Activated B cell treated with CpG ODN at 0.5 μM for 24 hours (primary cell): ENCODE measurements at regions of chr7 and their contacts with region 1.

Region 1: GRCh38 chr7:69739931-69740431 is 141.7 kb downstream of the AUTS2 start:
- DNase-seq: peak; percentile 18
- ATAC-seq: peak; percentile 56
- H3K4me3 Mint-ChIP-seq: peak overlapping the region; percentile 33
- H3K27ac Mint-ChIP-seq: peak overlapping the region; percentile 82
- H3K4me1 Mint-ChIP-seq: peaks cover 27% of the 10 kb centered on the region
- H3K27me3 Mint-ChIP-seq: no peaks in the 10 kb centered on the region
- CTCF ChIP-seq: no peak

Region 2: GRCh38 chr7:69564454-69565417 is 175.2 kb before region 1 on chr7:
- CTCF ChIA-PET with region 1: no interaction called
- POLR2A ChIA-PET with region 1: interaction called, 10 read pairs
- intact Hi-C with region 1: no loop called
- DNase-seq: no peak
- ATAC-seq: no peak
- H3K4me3 Mint-ChIP-seq: no peak overlapping the region
- H3K27ac Mint-ChIP-seq: no peak overlapping the region
- H3K4me1 Mint-ChIP-seq: no peaks in the 10 kb centered on the region
- H3K27me3 Mint-ChIP-seq: peaks cover 4% of the 10 kb centered on the region
- CTCF ChIP-seq: no peak

Region 3: GRCh38 chr7:69651101-69651590 is 88.8 kb before region 1 on chr7:
- CTCF ChIA-PET with region 1: no interaction called
- POLR2A ChIA-PET with region 1: interaction called, 4 read pairs
- intact Hi-C with region 1: loop called (anchors 5 kb)
- DNase-seq: no peak
- ATAC-seq: peak; percentile 85
- H3K4me3 Mint-ChIP-seq: peak overlapping the region; percentile 38
- H3K27ac Mint-ChIP-seq: peak overlapping the region; percentile 32
- H3K4me1 Mint-ChIP-seq: peaks cover 42% of the 10 kb centered on the region
- H3K27me3 Mint-ChIP-seq: no peaks in the 10 kb centered on the region
- CTCF ChIP-seq: no peak

Region 4: GRCh38 chr7:69696054-69696591 is 43.9 kb before region 1 on chr7:
- CTCF ChIA-PET with region 1: no interaction called
- POLR2A ChIA-PET with region 1: interaction called, 5 read pairs
- intact Hi-C with region 1: loop called (anchors 2 kb)
- DNase-seq: no peak
- ATAC-seq: peak; percentile 87
- H3K4me3 Mint-ChIP-seq: peak overlapping the region; percentile 13
- H3K27ac Mint-ChIP-seq: peak overlapping the region; percentile 56
- H3K4me1 Mint-ChIP-seq: peaks cover 43% of the 10 kb centered on the region
- H3K27me3 Mint-ChIP-seq: no peaks in the 10 kb centered on the region
- CTCF ChIP-seq: no peak

Region 5: DNA sequence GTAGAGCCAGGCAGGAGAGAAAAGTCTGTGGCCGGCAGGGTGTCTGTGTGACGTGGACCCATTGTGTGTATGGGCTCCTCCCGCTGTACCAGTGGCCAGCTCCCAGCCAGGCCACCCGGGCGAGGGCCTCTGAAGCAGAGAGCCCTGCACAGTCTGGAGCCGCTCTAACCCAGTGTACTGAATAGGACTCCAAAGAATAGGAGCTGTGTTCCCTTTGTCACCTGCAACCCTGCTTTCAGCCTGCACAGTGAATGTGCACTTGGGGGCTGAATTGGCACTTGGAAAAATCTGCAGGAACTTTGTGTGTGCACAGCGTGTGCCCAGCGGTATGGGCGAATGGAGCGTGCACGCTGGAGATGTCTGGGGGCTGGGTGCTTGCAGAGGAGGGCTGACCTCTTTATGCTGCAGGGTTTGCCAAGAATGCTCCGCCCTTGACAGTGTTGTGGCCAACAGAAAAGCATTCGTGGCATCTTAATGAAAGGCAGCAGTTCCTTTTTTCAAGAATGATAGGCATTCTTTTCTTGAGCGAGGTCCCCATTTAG is 74.5 kb after region 1 on chr7:
- CTCF ChIA-PET with region 1: no interaction called
- POLR2A ChIA-PET with region 1: no interaction called
- intact Hi-C with region 1: no loop called
- DNase-seq: no peak
- ATAC-seq: no peak
- H3K4me3 Mint-ChIP-seq: no peak overlapping the region
- H3K27ac Mint-ChIP-seq: no peak overlapping the region
- H3K4me1 Mint-ChIP-seq: no peaks in the 10 kb centered on the region
- H3K27me3 Mint-ChIP-seq: no peaks in the 10 kb centered on the region
- CTCF ChIP-seq: no peak

Region 6: DNA sequence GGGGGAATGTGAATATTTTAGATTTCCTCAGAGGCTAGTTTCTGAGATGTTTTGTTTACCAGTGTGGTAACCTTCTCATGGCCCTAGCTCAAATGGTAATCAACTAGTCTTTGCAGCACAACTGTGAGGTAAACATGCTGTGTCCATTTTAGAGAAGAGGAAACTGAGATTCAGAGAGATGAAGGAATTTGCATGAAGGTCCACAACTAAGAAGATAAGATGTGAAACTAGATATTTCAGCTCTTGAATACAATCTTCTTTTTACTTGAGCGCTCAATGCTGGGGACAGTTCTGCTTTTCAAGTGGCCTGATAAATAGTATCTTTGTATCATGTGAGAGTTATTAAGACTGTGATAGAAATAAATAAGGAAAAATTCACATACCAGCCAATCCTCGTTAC is 103.7 kb after region 1 on chr7:
- CTCF ChIA-PET with region 1: no interaction called
- POLR2A ChIA-PET with region 1: interaction called, 23 read pairs
- intact Hi-C with region 1: loop called (anchors 1 kb)
- DNase-seq: no peak
- ATAC-seq: peak; percentile 37
- H3K4me3 Mint-ChIP-seq: peak overlapping the region; percentile 12
- H3K27ac Mint-ChIP-seq: peak overlapping the region; percentile 59
- H3K4me1 Mint-ChIP-seq: peaks cover 76% of the 10 kb centered on the region
- H3K27me3 Mint-ChIP-seq: no peaks in the 10 kb centered on the region
- CTCF ChIP-seq: no peak

Region 7: GRCh38 chr7:69908454-69908853 is 168.5 kb after region 1 on chr7:
- CTCF ChIA-PET with region 1: no interaction called
- POLR2A ChIA-PET with region 1: no interaction called
- intact Hi-C with region 1: no loop called
- DNase-seq: no peak
- ATAC-seq: no peak
- H3K4me3 Mint-ChIP-seq: no peak overlapping the region
- H3K27ac Mint-ChIP-seq: no peak overlapping the region
- H3K4me1 Mint-ChIP-seq: peaks cover 42% of the 10 kb centered on the region
- H3K27me3 Mint-ChIP-seq: no peaks in the 10 kb centered on the region
- CTCF ChIP-seq: no peak